ENCODE measurements at regions of chr1 and their contacts with region 1.

Region 1: DNA sequence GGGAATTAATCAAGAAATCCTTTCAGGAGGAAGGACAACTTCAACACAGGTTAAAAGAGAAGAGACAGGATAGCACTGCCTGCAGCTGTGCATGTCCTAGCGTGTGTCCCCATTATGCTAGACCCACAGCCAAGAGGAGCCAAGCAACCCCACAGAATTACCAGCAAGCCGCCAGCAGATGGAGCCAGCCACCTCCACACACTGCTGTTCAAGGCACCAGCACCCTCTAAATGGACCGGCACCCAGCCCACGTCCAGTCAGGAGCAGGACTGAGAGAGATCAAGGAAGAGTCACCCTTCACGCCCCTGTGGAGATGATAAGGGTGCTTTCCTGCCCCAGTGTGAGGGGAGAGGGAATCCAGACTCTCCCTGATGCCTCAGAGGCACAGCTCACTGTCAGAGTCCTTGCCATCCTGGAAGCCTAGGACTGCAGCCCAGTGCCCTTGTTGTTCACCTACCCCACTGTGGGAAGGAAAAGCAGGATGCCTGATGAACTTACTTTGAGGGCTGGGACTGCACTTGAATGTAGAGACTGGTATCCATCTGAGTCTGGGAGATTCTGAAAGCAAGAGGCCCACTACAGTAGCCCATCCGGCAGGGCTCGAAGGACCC is 37.1 kb upstream of the CTTNBP2NL start:
- DNase-seq: peak; percentile 43
- H3K4me3 Mint-ChIP-seq: no peak overlapping the region
- H3K27ac Mint-ChIP-seq: no peak overlapping the region
- H3K4me1 Mint-ChIP-seq: peaks cover 3% of the 10 kb centered on the region
- H3K27me3 Mint-ChIP-seq: peaks cover 48% of the 10 kb centered on the region

Region 2: GRCh38 chr1:112344754-112345423 is 14.0 kb before region 1 on chr1:
- CTCF ChIA-PET with region 1: interaction called, 15 read pairs
- POLR2A ChIA-PET with region 1: no interaction called
- DNase-seq: peak; percentile 19
- H3K4me3 Mint-ChIP-seq: no peak overlapping the region
- H3K27ac Mint-ChIP-seq: peak overlapping the region; percentile 22
- H3K4me1 Mint-ChIP-seq: peaks cover 18% of the 10 kb centered on the region
- H3K27me3 Mint-ChIP-seq: peaks cover 12% of the 10 kb centered on the region

Region 3: DNA sequence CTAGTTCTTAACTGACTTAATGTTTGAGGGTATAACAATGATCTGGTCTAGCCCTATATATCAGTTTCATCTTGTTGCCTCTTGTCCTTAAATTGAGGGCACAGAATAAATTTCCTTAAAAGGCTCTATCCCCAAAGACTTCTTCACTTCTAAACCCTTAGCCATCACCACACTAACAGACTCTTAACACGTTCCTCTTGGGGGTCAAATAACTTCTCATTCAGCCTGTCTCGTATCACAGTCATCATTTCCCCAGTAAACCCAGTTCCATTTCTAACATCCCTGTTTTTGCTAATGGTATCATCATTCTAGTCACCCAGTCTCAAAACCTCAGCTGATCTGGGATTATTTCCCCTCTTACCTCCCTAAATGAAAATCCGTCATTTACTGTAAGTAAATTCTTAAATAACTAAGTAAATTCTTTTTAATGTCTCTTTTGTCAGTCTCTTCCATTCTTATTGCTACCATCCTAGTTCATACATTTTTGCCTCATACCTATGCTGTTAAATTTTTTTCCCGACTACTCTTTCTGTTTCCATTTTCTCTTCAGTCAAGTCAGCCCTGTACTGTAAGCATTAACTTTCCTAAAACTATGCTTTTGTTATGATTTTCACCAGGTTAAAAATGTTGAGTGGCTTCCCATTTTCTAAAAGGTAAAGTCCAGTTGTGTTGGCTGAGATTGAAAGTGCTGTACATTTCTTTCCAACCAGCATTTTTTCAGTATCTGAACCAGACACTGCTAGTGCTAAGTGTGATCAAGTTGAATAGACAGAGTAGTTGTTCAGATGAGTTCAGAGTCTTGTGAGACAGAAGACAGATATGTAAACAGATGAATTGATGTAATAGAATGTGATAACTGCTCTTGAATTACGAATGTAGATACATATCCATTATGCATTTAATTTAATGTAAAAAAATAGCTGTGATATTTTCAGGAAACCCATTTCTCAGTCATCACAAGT is 44.1 kb after region 1 on chr1:
- CTCF ChIA-PET with region 1: no interaction called
- POLR2A ChIA-PET with region 1: no interaction called
- DNase-seq: no peak
- H3K4me3 Mint-ChIP-seq: no peak overlapping the region
- H3K27ac Mint-ChIP-seq: no peak overlapping the region
- H3K4me1 Mint-ChIP-seq: peaks cover 10% of the 10 kb centered on the region
- H3K27me3 Mint-ChIP-seq: peaks cover 7% of the 10 kb centered on the region

Measured in activated CD4-positive, alpha-beta memory T cell treated with anti-CD3 and anti-CD28 coated beads, Interleukin-2, amount 10 ng/mL, durations not matched to agents 7 days and 5 days (primary cell).